Colonic mucosa (tissue), 4 donors: ENCODE measurements at regions of chr14 and their contacts with region 1.

Region 1: DNA sequence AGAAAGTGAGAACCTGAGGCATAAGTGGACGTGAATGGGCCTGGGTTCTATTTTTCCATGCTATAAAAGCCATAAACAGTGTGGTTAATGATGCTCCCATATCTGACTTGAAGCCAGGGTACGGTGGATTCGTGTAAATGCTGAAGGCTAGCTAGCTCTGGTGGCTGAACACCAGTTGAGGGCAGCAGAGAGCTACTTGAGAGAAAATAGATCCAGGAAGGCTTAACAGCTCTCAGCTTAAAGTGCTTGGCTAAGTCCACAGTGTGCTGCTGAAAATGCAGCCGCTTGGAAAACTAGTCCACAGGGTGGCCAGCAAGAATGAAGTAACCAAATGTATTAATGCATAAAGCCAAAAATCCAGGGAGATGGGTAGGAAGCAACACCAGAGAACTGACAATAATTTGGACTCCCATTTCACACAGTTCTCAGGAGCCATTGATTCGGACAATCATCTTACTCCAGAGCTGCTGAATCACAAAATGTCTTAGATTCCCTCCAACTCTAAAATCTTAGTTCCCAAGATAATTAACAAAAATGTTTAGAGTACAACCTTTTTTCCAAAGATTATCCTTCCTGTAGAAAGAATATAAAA is 15.0 kb upstream of the FOXG1 start:
- DNase-seq: peak; percentile 33
- H3K4me3 ChIP-seq: no peak overlapping the region
- H3K27ac ChIP-seq: no peak overlapping the region
- H3K4me1 ChIP-seq: no peaks in the 10 kb centered on the region
- H3K27me3 ChIP-seq: peaks cover 6% of the 10 kb centered on the region
- CTCF ChIP-seq: peak; percentile 31

Region 2: DNA sequence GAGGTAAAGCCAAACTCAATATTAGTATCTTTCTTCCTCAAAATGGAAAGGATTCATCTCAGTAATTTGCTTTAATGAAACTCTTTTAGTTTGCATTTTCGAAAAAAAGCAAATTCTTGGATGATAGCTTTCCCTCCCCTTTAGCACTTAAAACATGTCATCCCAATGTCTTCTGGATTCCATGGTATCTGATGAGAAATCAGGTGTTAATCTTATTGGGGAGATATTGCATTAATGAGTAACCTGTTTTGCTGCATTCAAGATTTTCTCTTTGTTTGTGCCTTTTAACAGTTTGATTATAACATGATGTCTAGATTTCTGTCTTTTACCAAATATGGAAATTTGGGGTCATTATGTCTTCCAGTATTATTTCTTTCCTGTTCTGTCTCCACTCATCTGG is 390.1 kb before region 1 on chr14:
- intact Hi-C with region 1: no loop called
- DNase-seq: no peak
- H3K4me3 ChIP-seq: no peak overlapping the region
- H3K27ac ChIP-seq: no peak overlapping the region
- H3K4me1 ChIP-seq: no peaks in the 10 kb centered on the region
- H3K27me3 ChIP-seq: no peaks in the 10 kb centered on the region
- CTCF ChIP-seq: no peak

Region 3: DNA sequence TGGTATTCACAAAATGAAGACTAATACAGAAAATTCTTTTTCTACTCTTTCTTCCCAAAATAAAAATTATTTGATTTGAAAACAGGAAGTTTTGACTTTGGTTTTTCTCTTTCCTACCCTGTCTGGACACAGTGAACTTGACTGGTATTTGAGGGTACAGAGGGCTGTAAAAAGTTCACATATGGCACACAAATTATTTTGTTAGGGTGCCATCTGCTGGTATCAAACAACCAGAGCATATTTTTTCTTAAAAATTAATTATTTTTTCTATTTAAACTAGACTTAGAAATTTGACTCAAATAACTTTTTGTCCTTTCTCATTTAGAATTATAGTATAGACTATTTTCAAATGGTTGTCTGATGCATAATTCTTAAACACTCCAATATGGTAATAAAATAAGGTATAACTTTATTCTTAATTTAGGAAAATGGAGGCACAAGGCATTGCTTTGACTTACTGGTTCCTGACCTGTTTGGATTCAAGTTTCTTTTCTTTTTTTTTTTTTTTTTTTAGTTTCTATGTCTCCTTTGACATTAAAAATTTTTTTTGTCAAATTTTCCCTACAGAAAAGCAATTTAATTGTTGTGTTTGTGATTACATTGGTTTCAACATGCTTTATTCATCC is 785.4 kb after region 1 on chr14:
- intact Hi-C with region 1: loop called (anchors 5 kb)
- DNase-seq: no peak
- H3K4me3 ChIP-seq: no peak overlapping the region
- H3K27ac ChIP-seq: no peak overlapping the region
- H3K4me1 ChIP-seq: no peaks in the 10 kb centered on the region
- H3K27me3 ChIP-seq: no peaks in the 10 kb centered on the region
- CTCF ChIP-seq: no peak

Region 4: GRCh38 chr14:30214461-30215090 is 1463.0 kb after region 1 on chr14:
- intact Hi-C with region 1: loop called (anchors 2 kb)
- DNase-seq: no peak
- H3K4me3 ChIP-seq: no peak overlapping the region
- H3K27ac ChIP-seq: no peak overlapping the region
- H3K4me1 ChIP-seq: no peaks in the 10 kb centered on the region
- H3K27me3 ChIP-seq: no peaks in the 10 kb centered on the region
- CTCF ChIP-seq: peak; percentile 35